Sciatic nerve (tissue), 2 donors: ENCODE measurements at regions of chr11 and their contacts with region 1.

Region 1: DNA sequence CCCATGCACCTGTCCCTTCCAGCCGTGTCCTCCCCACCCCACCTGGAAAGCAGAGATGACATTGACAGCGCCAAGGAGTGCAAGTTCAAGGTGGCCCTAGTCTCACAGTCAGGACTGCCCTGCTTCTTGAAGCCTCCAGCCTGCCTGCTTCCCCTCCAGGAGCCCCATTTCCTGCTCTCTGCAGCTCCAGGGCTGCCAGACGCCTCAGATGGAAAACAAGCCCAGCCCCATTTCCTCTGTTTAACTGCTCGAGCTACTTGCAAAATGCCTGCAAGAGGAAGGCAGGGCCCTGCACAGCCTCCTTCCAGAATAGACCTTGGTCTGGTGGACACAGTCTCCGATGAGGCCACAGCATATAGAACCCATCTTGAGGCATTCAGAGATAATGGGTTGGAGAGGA is 5.0 kb upstream of the DGKZ start:
- DNase-seq: no peak
- ATAC-seq: no peak

Region 2: DNA sequence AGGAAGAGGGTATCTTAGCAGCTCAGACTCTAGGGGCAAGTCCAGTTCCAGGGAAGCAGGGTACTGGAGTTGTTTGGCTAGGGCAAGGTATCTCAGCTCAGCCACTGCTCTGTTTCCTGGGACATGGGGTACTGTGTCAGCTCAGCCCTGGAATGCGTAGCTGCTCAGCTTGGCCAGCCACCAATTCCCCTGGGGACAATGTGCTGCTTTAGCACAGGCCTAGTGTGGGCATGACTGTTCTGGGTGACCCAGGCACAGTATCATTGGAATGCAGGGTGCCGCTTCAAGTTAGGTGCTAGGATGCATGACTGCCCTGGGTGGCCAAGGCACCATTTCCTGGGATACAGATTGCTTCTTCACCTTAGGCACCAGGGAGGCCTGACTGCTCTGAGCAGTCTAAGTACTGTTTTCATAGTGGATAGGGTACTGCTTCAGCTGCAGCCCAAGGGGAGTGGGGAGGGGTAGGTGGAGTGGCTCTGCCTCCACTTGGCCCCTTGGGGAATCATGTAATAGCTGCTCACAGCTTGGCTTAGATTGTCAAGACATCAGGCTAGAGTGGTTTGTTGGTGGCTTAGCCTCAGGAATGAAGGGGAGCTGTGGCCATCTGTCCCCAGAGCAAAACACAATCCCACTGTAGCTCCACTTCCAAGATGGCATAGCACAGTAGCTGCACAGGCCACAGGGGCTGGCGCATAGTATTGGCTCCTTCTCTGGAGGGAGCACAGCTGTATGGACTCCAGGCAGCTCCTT is 963.7 kb after region 1 on chr11:
- intact Hi-C with region 1: loop called (anchors 5 kb)
- DNase-seq: no peak
- ATAC-seq: peak; percentile 75